ENCODE measurements at regions of chr22 and their contacts with region 1.

Region 1: DNA sequence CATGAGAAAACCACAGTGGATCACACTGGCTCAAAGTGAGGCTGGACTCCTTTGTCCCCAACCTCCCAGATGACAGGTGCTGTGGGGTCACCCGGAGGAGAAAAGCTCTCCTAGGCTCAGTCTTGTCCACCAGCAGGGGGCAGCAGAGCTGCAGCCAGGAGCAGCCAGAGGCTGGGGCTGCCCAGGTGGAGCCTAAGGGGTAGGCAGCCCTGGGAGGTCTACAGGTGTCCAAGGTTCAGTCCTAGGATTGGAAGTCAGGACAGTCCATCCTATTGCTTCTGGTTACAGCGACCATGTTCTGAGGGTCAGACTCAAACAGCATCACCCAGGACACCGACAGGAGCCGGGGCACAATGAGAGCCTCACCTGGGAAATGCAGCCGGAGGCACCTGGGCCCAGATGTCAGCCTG is 77.6 kb upstream of the IGLL5 start:
- DNase-seq: peak; percentile 77
- H3K4me3 ChIP-seq: no peak overlapping the region
- H3K27ac ChIP-seq: no peak overlapping the region
- H3K4me1 ChIP-seq: peaks cover 35% of the 10 kb centered on the region
- CTCF ChIP-seq: peak; percentile 89

Region 2: DNA sequence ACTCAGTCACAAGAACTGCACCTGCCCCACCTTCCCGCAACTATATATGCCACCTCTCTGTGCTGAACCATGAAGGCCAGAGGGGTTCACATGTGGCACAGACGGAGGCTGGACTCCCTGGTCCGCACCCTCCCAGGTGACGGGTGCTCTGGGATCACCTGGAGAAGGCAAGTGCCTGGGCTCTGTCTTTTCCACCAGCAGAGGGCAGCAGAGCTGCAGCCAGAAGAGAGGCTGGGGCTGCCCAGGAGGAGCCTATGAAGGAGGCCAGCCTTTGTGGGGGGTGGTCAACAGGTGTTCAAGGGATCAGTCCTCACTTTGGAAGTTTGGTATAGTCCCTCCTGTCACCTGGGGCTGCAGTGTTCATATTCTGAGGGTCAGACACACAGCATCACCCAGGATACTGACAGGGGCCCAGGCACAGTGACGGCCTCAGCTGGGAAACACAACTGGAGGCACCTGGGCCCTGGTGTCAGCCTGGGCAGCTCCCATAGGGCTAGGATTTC is 38.4 kb after region 1 on chr22:
- CTCF ChIA-PET with region 1: interaction called, 3 read pairs
- POLR2A ChIA-PET with region 1: no interaction called
- intact Hi-C with region 1: loop called (anchors 1 kb)
- DNase-seq: peak; percentile 79
- H3K4me3 ChIP-seq: no peak overlapping the region
- H3K27ac ChIP-seq: no peak overlapping the region
- H3K4me1 ChIP-seq: peaks cover 34% of the 10 kb centered on the region
- CTCF ChIP-seq: peak; percentile 99

Region 3: GRCh38 chr22:22877523-22878210 is 67.6 kb after region 1 on chr22:
- CTCF ChIA-PET with region 1: no interaction called
- POLR2A ChIA-PET with region 1: no interaction called
- intact Hi-C with region 1: loop called (anchors 1 kb)
- DNase-seq: peak; percentile 75
- H3K4me3 ChIP-seq: no peak overlapping the region
- H3K27ac ChIP-seq: no peak overlapping the region
- H3K4me1 ChIP-seq: peaks cover 53% of the 10 kb centered on the region
- CTCF ChIP-seq: peak; percentile 84